Caco-2 (cell line): ENCODE measurements at regions of chr2 and their contacts with region 1.

Region 1: GRCh38 chr2:113203901-113204519 is 30.2 kb downstream of the PSD4 start:
- DNase-seq: peak; percentile 85 to 90
- H3K4me3 ChIP-seq: no peak overlapping the region
- H3K4me3 Mint-ChIP-seq: no peak overlapping the region
- H3K27ac Mint-ChIP-seq: peak overlapping the region; percentile 65
- H3K4me1 ChIP-seq: peaks cover 14% of the 10 kb centered on the region
- H3K4me1 Mint-ChIP-seq: peaks cover 26% of the 10 kb centered on the region
- H3K27me3 ChIP-seq: no peaks in the 10 kb centered on the region
- H3K27me3 Mint-ChIP-seq: no peaks in the 10 kb centered on the region
- CTCF ChIP-seq: peak; percentile 91 to 92

Region 2: GRCh38 chr2:112794131-112794733 is 409.8 kb before region 1 on chr2:
- CTCF ChIA-PET with region 1: no interaction called
- POLR2A ChIA-PET with region 1: no interaction called
- intact Hi-C with region 1: no loop called
- DNase-seq: peak; percentile 32 to 55
- H3K4me3 ChIP-seq: no peak overlapping the region
- H3K4me3 Mint-ChIP-seq: no peak overlapping the region
- H3K27ac Mint-ChIP-seq: no peak overlapping the region
- H3K4me1 ChIP-seq: peaks cover 31% of the 10 kb centered on the region
- H3K4me1 Mint-ChIP-seq: peaks cover 32% of the 10 kb centered on the region
- H3K27me3 ChIP-seq: no peaks in the 10 kb centered on the region
- H3K27me3 Mint-ChIP-seq: no peaks in the 10 kb centered on the region
- CTCF ChIP-seq: no peak

Region 3: GRCh38 chr2:113138428-113139322 is 65.3 kb before region 1 on chr2:
- CTCF ChIA-PET with region 1: interaction called, 78 read pairs
- POLR2A ChIA-PET with region 1: interaction called, 8 read pairs
- intact Hi-C with region 1: loop called (anchors 1 kb)
- DNase-seq: peak; percentile 67 to 84
- H3K4me3 ChIP-seq: peak overlapping the region; percentile 27
- H3K4me3 Mint-ChIP-seq: peak overlapping the region; percentile 59
- H3K27ac Mint-ChIP-seq: peak overlapping the region; percentile 61
- H3K4me1 ChIP-seq: peaks cover 12% of the 10 kb centered on the region
- H3K4me1 Mint-ChIP-seq: peaks cover 12% of the 10 kb centered on the region
- H3K27me3 ChIP-seq: no peaks in the 10 kb centered on the region
- H3K27me3 Mint-ChIP-seq: no peaks in the 10 kb centered on the region
- CTCF ChIP-seq: peak; percentile 80 to 81

Region 4: DNA sequence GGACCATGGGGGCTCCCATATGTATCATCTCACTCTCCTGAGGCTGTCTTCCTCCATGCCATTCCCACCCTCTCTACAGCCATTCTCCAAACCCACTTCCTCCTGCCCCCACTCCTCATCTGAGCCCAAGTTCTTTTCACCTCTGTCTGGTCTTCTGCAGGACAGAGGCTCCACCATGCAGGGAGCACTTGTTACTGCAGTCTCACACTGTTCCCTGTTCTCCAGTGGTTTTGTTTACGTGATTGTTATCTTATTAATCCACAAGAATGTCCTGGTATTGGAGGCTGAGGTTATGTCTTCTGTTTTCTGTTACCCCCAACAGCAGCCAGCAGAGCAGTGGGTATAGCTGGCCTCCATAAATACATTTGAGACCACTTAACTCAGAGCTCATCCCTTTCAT is 23.3 kb after region 1 on chr2:
- CTCF ChIA-PET with region 1: interaction called, 47 read pairs
- POLR2A ChIA-PET with region 1: no interaction called
- intact Hi-C with region 1: loop called (anchors 1 kb)
- DNase-seq: no peak
- H3K4me3 ChIP-seq: no peak overlapping the region
- H3K4me3 Mint-ChIP-seq: no peak overlapping the region
- H3K27ac Mint-ChIP-seq: peak overlapping the region; percentile 37
- H3K4me1 ChIP-seq: peaks cover 49% of the 10 kb centered on the region
- H3K4me1 Mint-ChIP-seq: peaks cover 51% of the 10 kb centered on the region
- H3K27me3 ChIP-seq: no peaks in the 10 kb centered on the region
- H3K27me3 Mint-ChIP-seq: no peaks in the 10 kb centered on the region
- CTCF ChIP-seq: peak in 1 of 2 experiments; percentile 34

Region 5: DNA sequence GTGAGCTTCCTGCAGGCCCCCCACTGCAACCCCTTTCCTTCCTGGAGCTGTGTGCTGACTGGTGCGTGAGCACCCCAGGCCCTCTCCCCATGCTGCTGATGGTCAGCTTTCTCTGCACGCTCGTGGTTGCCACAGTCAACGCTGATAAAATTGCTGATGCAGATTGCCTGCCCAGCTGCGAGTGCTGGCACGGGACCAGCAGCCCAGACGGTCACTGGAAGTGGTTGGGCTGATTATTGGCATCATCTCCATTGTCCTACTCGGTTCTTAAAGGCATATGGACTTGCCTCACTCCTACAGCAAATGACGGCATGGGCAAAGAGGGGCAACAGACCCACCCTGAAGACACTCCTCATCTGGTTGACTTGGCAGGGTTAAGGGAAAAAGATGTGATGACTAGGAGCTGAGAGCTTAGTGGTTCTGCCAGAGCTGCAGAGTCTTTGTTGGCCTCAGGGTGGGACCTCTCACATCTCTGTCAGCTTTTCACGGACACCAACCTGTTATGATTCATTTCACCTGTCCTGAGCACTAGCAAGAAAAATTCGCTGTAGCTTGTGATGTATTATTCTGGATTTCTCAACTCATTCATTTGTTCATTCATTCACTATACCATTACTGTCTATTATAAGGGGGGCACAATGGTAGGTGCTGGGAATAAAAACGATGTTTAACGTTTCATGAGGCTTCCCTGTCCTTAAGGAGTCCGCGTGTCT is 36.3 kb after region 1 on chr2:
- CTCF ChIA-PET with region 1: interaction called, 70 read pairs
- POLR2A ChIA-PET with region 1: interaction called, 17 read pairs
- intact Hi-C with region 1: loop called (anchors 1 kb)
- DNase-seq: no peak
- H3K4me3 ChIP-seq: no peak overlapping the region
- H3K4me3 Mint-ChIP-seq: peak overlapping the region; percentile 23
- H3K27ac Mint-ChIP-seq: peak overlapping the region; percentile 71
- H3K4me1 ChIP-seq: peaks cover 46% of the 10 kb centered on the region
- H3K4me1 Mint-ChIP-seq: peaks cover 35% of the 10 kb centered on the region
- H3K27me3 ChIP-seq: no peaks in the 10 kb centered on the region
- H3K27me3 Mint-ChIP-seq: no peaks in the 10 kb centered on the region
- CTCF ChIP-seq: no peak

Region 6: DNA sequence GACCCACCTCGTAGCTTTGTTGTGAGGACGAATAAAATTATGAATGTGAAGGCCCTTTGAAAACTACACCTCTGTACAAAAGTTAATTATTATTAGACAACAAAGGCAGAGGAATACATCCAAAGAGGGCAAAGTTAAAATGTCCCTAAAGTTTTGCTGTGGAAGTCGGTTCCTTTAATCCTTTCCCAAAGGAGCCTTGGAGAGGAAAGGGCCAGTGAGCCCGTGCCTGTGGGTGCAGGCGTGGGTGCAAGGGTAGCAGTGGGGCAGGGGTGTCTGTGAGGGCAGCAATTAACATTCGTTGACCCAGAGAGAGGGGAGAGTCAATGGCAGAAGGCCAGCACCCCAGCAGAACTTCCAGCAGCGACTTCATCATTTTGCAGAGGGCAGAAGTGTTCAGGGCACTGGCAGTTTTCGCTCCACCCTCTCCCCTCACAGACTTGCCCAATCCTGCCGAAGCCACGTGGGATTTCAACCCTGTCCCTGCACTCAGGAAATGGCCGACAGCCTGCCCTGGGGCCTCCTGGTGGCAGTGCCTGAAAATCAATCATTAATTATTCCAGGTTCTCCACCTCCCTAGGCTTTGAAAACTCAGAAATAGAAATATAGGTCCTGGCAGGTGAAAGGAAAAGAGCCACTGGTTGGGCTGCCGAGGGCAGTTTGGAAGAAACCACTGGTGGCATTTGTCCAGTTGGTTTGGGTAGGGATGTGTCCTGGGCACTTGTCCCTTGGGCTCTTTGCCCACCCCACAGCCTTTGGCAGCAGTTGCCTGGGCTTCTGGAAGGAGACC is 78.9 kb after region 1 on chr2:
- CTCF ChIA-PET with region 1: no interaction called
- POLR2A ChIA-PET with region 1: no interaction called
- intact Hi-C with region 1: loop called (anchors 1 kb)
- DNase-seq: peak; percentile 84 to 92
- H3K4me3 ChIP-seq: no peak overlapping the region
- H3K4me3 Mint-ChIP-seq: no peak overlapping the region
- H3K27ac Mint-ChIP-seq: peak overlapping the region; percentile 59
- H3K4me1 ChIP-seq: peaks cover 25% of the 10 kb centered on the region
- H3K4me1 Mint-ChIP-seq: peaks cover 25% of the 10 kb centered on the region
- H3K27me3 ChIP-seq: no peaks in the 10 kb centered on the region
- H3K27me3 Mint-ChIP-seq: no peaks in the 10 kb centered on the region
- CTCF ChIP-seq: peak; percentile 33 to 38

Region 7: DNA sequence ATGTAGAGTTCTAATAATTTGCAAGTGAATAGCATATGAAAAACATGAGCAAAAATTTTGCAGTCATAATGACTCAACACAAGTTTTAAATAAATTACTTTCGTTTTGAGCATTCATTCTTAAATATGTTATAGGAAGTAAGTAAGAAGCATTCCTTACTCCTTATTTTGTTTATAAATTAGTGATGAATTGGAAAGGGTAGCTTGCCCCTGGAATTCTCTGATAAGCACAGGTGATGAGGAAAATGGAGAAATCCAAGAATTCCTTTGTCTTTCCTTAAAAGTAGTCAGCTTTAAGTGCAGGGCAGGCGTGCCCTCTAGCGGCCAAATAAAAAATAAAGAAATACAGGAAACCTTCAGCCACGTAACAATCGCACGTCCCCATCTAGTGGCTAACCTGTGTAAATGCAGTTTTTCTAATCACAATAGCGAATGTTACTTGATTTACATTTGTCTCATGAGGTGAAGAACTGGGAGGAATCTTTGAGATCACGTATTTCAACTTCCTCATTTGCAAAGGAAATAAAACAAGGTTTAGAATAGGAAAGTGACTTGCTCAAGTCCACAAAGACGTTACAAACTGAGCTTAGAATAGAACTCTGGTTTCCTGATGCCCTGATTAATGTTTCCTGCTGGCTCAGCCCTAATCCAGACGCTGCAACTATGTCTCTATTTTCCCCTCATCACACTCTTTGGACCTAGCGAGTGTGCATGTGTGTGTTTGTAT is 186.3 kb after region 1 on chr2:
- CTCF ChIA-PET with region 1: interaction called, 10 read pairs
- POLR2A ChIA-PET with region 1: interaction called, 4 read pairs
- intact Hi-C with region 1: loop called (anchors 1 kb)
- DNase-seq: peak; percentile 76 to 84
- H3K4me3 ChIP-seq: no peak overlapping the region
- H3K4me3 Mint-ChIP-seq: no peak overlapping the region
- H3K27ac Mint-ChIP-seq: no peak overlapping the region
- H3K4me1 ChIP-seq: no peaks in the 10 kb centered on the region
- H3K4me1 Mint-ChIP-seq: no peaks in the 10 kb centered on the region
- H3K27me3 ChIP-seq: no peaks in the 10 kb centered on the region
- H3K27me3 Mint-ChIP-seq: no peaks in the 10 kb centered on the region
- CTCF ChIP-seq: peak; percentile 85 to 95

Region 8: DNA sequence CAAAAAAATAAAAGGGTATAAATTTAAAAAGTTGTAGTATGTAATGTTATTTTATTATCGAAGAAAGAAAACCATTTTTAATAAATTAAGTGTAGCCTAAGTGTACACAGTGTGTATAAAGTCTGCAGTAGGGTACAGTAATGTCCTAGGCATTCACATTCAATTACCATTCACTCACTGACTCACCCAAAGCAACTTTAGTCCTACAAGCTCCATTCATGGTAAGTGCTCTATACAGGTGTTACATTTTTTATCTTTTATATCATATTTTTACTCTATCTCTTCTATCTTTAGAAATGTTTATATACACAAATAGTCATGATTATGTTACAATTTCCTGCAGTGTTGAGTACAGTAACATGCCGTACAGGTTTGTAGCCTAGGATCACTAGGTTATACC is 482.5 kb after region 1 on chr2:
- CTCF ChIA-PET with region 1: no interaction called
- POLR2A ChIA-PET with region 1: no interaction called
- intact Hi-C with region 1: no loop called
- DNase-seq: no peak
- H3K4me3 ChIP-seq: no peak overlapping the region
- H3K4me3 Mint-ChIP-seq: no peak overlapping the region
- H3K27ac Mint-ChIP-seq: no peak overlapping the region
- H3K4me1 ChIP-seq: no peaks in the 10 kb centered on the region
- H3K4me1 Mint-ChIP-seq: no peaks in the 10 kb centered on the region
- H3K27me3 ChIP-seq: no peaks in the 10 kb centered on the region
- H3K27me3 Mint-ChIP-seq: no peaks in the 10 kb centered on the region
- CTCF ChIP-seq: no peak